ENCODE measurements at regions of chr1 and their contacts with region 1.

Region 1: DNA sequence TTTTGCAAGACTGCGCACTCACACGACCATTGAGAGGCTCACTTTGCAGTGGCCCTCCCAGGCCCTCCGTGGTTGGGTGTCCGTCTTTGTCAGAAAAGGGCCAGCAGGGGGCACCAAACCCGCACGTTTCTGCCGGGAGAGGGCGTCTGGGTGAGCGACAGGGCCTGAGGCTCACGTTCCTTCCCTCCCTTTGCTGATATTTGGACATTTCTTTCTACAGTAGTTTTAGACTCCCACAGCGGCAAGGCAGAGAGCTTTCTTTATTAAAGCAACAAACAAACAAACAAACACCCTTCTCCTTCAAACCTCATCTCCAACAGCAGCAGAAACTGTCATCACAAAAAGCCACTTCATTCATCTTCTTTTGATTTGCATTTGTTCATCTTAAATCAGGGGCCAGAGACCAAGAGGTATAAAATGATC is 79.2 kb upstream of the WDR26 start:
- DNase-seq: peak; percentile 71 to 79 (median 73)
- H3K4me3 ChIP-seq: no peak overlapping the region
- H3K4me3 Mint-ChIP-seq: no peak overlapping the region
- H3K27ac ChIP-seq: no peak overlapping the region
- H3K27ac Mint-ChIP-seq: peak overlapping the region in 5 of 7 donors; percentile 10 to 44 (median 31)
- H3K4me1 ChIP-seq: no peaks in the 10 kb centered on the region
- H3K4me1 Mint-ChIP-seq: peaks cover 5 to 7% (median 7%) of the 10 kb centered on the region in 4 donors
- H3K27me3 ChIP-seq: no peaks in the 10 kb centered on the region
- H3K27me3 Mint-ChIP-seq: no peaks in the 10 kb centered on the region

Region 2: GRCh38 chr1:224497714-224498573 is 15.9 kb before region 1 on chr1:
- CTCF ChIA-PET with region 1: interaction called, 37 read pairs
- POLR2A ChIA-PET with region 1: interaction called, 3 read pairs
- intact Hi-C with region 1: no loop called
- DNase-seq: peak in 4 of 5 donors; percentile 12 to 52 (median 16)
- H3K4me3 ChIP-seq: no peak overlapping the region
- H3K4me3 Mint-ChIP-seq: peak overlapping the region in 6 of 8 donors; percentile 9 to 68 (median 40)
- H3K27ac ChIP-seq: no peak overlapping the region
- H3K27ac Mint-ChIP-seq: peak overlapping the region; percentile 16 to 86 (median 79)
- H3K4me1 ChIP-seq: peaks cover 23% of the 10 kb centered on the region
- H3K4me1 Mint-ChIP-seq: peaks cover 21 to 34% (median 29%) of the 10 kb centered on the region in 4 donors
- H3K27me3 ChIP-seq: no peaks in the 10 kb centered on the region
- H3K27me3 Mint-ChIP-seq: peaks cover 0 to 1% of the 10 kb centered on the region in 2 donors

Region 3: GRCh38 chr1:224644553-224645154 is 130.9 kb after region 1 on chr1:
- CTCF ChIA-PET with region 1: interaction called, 51 read pairs
- POLR2A ChIA-PET with region 1: no interaction called
- intact Hi-C with region 1: loop called (anchors 1 kb)
- DNase-seq: peak in 4 of 5 donors; percentile 52 to 65 (median 60)
- H3K4me3 ChIP-seq: no peak overlapping the region
- H3K4me3 Mint-ChIP-seq: no peak overlapping the region
- H3K27ac ChIP-seq: no peak overlapping the region
- H3K27ac Mint-ChIP-seq: no peak overlapping the region
- H3K4me1 ChIP-seq: no peaks in the 10 kb centered on the region
- H3K4me1 Mint-ChIP-seq: peaks cover 0 to 2% (median 0%) of the 10 kb centered on the region in 4 donors
- H3K27me3 ChIP-seq: no peaks in the 10 kb centered on the region
- H3K27me3 Mint-ChIP-seq: peaks cover 2 to 9% of the 10 kb centered on the region in 2 donors

Region 4: DNA sequence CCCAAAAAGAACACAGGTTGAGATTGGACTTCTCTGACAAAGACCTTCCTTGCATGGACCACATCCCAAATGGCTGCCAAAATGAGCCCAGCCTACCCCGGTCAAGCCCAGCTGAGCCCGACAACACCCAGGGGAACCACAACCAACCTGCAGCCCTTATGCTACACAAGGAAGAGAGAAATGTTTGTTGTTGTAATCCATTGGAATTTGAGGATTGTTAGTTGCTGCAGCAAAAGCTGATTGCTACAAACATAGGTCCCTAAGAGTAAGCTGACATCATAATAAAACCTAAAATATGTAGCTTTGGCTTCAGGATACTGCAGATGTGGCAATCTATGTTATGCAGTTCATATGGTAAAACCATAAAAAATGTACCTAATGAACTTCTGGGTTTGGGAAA is 350.2 kb after region 1 on chr1:
- CTCF ChIA-PET with region 1: interaction called, 14 read pairs
- POLR2A ChIA-PET with region 1: no interaction called
- intact Hi-C with region 1: no loop called
- DNase-seq: no peak
- H3K4me3 ChIP-seq: no peak overlapping the region
- H3K4me3 Mint-ChIP-seq: no peak overlapping the region
- H3K27ac ChIP-seq: no peak overlapping the region
- H3K27ac Mint-ChIP-seq: no peak overlapping the region
- H3K4me1 ChIP-seq: no peaks in the 10 kb centered on the region
- H3K4me1 Mint-ChIP-seq: no peaks in the 10 kb centered on the region
- H3K27me3 ChIP-seq: no peaks in the 10 kb centered on the region
- H3K27me3 Mint-ChIP-seq: peaks cover 9 to 14% of the 10 kb centered on the region in 2 donors

Region 5: GRCh38 chr1:225977937-225978748 is 1464.3 kb after region 1 on chr1:
- CTCF ChIA-PET with region 1: interaction called, 4 read pairs
- POLR2A ChIA-PET with region 1: no interaction called
- intact Hi-C with region 1: loop called (anchors 5 kb)
- DNase-seq: no peak
- H3K4me3 ChIP-seq: no peak overlapping the region
- H3K4me3 Mint-ChIP-seq: no peak overlapping the region
- H3K27ac ChIP-seq: no peak overlapping the region
- H3K27ac Mint-ChIP-seq: peak overlapping the region in 1 of 7 donors; percentile 43
- H3K4me1 ChIP-seq: no peaks in the 10 kb centered on the region
- H3K4me1 Mint-ChIP-seq: peaks cover 0 to 6% (median 5%) of the 10 kb centered on the region in 4 donors
- H3K27me3 ChIP-seq: no peaks in the 10 kb centered on the region
- H3K27me3 Mint-ChIP-seq: no peaks in the 10 kb centered on the region

Measured in CD4-positive, alpha-beta memory T cell (primary cell).